BJ (cell line): ENCODE measurements at regions of chrX and their contacts with region 1.

Region 1: GRCh38 chrX:70554081-70554480 is 109.4 kb downstream of the DLG3 start:
- DNase-seq: no peak
- H3K4me3 ChIP-seq: no peak overlapping the region
- H3K27me3 ChIP-seq: no peaks in the 10 kb centered on the region
- CTCF ChIP-seq: peak; percentile 11; the same call in 1 of the 2 replicates

Region 2: DNA sequence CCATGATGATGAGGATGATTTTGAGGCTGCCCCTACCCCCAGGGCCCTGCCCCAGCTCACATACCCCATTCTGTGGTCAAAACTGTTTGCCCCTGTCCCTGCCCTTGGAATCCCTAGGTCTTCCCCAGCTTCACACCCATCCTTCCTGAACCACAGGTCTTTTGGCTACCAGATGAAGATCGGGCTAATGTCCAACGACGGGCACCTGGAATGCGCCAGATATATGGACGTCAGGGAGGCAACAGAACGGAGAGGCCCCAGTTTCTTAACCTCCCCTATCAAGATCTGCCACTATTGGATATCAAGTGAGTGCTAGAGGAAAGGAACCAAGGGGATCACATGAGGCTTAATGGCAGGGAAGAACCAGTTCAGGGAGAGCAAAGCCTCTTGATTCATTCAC is 124.3 kb before region 1 on chrX:
- CTCF ChIA-PET with region 1: no interaction called
- POLR2A ChIA-PET with region 1: no interaction called
- DNase-seq: no peak
- H3K4me3 ChIP-seq: no peak overlapping the region
- H3K27me3 ChIP-seq: no peaks in the 10 kb centered on the region
- CTCF ChIP-seq: no peak

Region 3: DNA sequence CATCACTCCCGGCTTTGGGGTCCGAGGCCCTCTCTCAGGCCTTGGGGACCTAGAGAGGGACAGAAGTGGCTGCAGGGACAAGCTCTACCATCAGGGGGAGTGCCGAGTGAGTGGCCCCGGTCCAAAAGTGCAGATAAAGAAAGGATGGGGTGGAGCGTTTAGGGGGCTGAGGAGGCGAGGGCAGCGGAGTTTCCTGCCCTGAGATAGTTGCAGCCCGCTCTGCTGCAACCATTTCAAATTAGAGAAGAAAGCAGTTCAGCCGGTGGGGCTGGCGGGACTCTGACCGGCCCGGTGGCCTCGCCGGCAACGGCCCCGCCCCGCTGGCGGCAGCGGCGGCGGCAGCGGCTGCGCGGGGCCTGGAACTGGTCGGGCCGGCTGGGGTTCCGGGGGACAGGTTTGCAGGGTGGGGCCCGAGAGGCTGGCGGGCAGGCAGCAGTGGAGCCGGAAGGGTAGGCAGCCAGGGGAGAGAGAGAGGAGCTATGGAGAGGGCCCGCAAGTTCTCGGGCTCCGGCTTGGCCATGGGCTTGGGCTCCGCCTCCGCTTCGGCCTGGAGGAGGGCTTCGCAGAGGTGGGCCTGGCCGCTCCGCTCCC is 101.8 kb before region 1 on chrX:
- CTCF ChIA-PET with region 1: interaction called, 14 read pairs
- POLR2A ChIA-PET with region 1: no interaction called
- DNase-seq: no peak
- H3K4me3 ChIP-seq: peak overlapping the region; percentile 54
- H3K27me3 ChIP-seq: no peaks in the 10 kb centered on the region
- CTCF ChIP-seq: peak; percentile 75

Region 4: GRCh38 chrX:70605352-70605751 is 51.3 kb after region 1 on chrX:
- CTCF ChIA-PET with region 1: no interaction called
- POLR2A ChIA-PET with region 1: no interaction called
- DNase-seq: no peak
- H3K4me3 ChIP-seq: no peak overlapping the region
- H3K27me3 ChIP-seq: no peaks in the 10 kb centered on the region
- CTCF ChIP-seq: no peak

Region 5: DNA sequence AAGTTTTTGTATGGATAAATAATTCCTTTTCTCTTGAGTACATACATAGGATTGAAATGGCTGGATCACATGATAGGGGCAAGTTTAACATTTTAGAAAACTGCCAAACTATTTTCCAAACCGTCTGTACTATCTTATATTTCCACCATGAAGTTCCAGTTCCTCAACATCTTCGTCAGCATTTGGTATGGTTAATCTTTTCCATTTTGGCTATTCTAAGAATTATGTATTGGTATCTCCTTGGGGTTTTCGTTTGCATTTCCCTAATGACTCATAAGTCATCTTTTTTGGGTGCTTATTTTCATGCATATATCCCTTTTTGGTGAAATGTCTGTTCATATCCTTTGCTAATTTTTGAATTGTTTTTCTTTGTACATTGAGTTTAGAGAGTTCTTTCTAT is 118.2 kb after region 1 on chrX:
- CTCF ChIA-PET with region 1: no interaction called
- POLR2A ChIA-PET with region 1: no interaction called
- DNase-seq: no peak
- H3K4me3 ChIP-seq: no peak overlapping the region
- H3K27me3 ChIP-seq: no peaks in the 10 kb centered on the region
- CTCF ChIP-seq: no peak

Region 6: GRCh38 chrX:71095543-71095911 is 541.4 kb after region 1 on chrX and contains the start of gene FOXO4:
- CTCF ChIA-PET with region 1: no interaction called
- POLR2A ChIA-PET with region 1: no interaction called
- DNase-seq: peak; percentile 30
- H3K4me3 ChIP-seq: peak within 1 kb of the TSS; percentile 66
- H3K27me3 ChIP-seq: no peaks in the 10 kb centered on the region; the same call in 1 of the 2 replicates
- CTCF ChIP-seq: no peak
- polyA plus RNA-seq, gene FOXO4: 2.1 and 2.4 TPM in 2 replicates